Panc1 (cell line): ENCODE measurements at regions of chr4 and their contacts with region 1.

Region 1: GRCh38 chr4:169604131-169604900 is 8.1 kb downstream of the NEK1 start:
- DNase-seq: no peak
- ATAC-seq: no peak
- H3K4me3 ChIP-seq: no peak overlapping the region
- H3K27ac ChIP-seq: no peak overlapping the region
- H3K4me1 ChIP-seq: no peaks in the 10 kb centered on the region; the same call in 1 of the 2 replicates
- H3K27me3 ChIP-seq: no peaks in the 10 kb centered on the region
- CTCF ChIP-seq: no peak

Region 2: GRCh38 chr4:169210504-169211118 is 393.7 kb before region 1 on chr4:
- CTCF ChIA-PET with region 1: no interaction called
- POLR2A ChIA-PET with region 1: no interaction called
- in situ Hi-C with region 1: no loop called
- intact Hi-C with region 1: no loop called
- DNase-seq: no peak
- ATAC-seq: no peak
- H3K4me3 ChIP-seq: no peak overlapping the region
- H3K27ac ChIP-seq: no peak overlapping the region
- H3K4me1 ChIP-seq: no peaks in the 10 kb centered on the region
- H3K27me3 ChIP-seq: no peaks in the 10 kb centered on the region
- CTCF ChIP-seq: no peak

Region 3: GRCh38 chr4:170027181-170027829 is 423.0 kb after region 1 on chr4:
- CTCF ChIA-PET with region 1: no interaction called
- POLR2A ChIA-PET with region 1: no interaction called
- in situ Hi-C with region 1: no loop called
- intact Hi-C with region 1: loop called (anchors 10 kb)
- DNase-seq: peak; percentile 36
- ATAC-seq: peak; percentile 87
- H3K4me3 ChIP-seq: peak overlapping the region; percentile 78 to 90
- H3K27ac ChIP-seq: peak overlapping the region; percentile 83
- H3K4me1 ChIP-seq: no peaks in the 10 kb centered on the region
- H3K27me3 ChIP-seq: no peaks in the 10 kb centered on the region
- CTCF ChIP-seq: no peak